ENCODE measurements at regions of chrX and their contacts with region 1.

Region 1: DNA sequence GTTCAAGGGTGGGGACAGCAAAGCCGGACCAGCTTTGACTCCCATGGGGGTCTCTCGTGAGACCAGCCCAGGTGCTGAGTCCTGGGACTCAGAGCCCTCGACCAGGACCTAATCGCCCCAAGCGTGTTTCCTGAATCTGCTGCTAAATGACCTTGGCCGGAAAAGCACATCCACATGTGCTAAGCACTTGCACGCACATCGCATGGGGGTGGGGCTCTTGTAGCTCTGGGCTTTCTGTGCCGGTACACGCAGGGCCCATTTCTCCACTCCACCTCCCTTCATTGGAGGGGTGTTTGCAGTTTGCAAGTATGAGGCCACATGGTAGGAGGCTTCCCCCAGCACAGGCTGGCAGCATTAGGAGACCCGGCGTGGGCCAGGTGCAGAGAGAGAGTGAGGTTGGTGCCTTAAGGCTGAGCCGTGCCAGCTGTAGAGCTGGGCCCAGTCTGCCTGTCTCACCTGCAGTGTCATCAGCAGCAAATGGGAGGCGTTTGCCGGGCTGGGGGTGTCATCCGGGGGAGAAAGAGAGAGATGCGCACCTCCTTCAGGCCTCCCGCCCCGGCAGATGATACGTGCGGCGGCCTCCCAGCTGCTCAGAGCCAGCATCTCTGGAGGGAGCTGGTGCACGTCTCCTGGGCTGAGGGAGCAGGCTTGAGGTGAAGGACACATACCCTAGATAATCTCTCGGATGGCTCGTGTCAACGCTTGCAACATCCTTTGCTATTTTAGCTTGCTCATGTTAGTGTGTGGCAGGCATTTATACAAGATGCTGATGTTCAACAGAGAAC is 45.2 kb upstream of the CLCN4 start:
- DNase-seq: peak; percentile 65
- ATAC-seq: peak; percentile 59
- H3K4me3 Mint-ChIP-seq: peak overlapping the region; percentile 84
- H3K27ac Mint-ChIP-seq: peak overlapping the region; percentile 99
- H3K4me1 Mint-ChIP-seq: peaks cover 85% of the 10 kb centered on the region
- H3K27me3 Mint-ChIP-seq: no peaks in the 10 kb centered on the region
- CTCF ChIP-seq: no peak

Region 2: DNA sequence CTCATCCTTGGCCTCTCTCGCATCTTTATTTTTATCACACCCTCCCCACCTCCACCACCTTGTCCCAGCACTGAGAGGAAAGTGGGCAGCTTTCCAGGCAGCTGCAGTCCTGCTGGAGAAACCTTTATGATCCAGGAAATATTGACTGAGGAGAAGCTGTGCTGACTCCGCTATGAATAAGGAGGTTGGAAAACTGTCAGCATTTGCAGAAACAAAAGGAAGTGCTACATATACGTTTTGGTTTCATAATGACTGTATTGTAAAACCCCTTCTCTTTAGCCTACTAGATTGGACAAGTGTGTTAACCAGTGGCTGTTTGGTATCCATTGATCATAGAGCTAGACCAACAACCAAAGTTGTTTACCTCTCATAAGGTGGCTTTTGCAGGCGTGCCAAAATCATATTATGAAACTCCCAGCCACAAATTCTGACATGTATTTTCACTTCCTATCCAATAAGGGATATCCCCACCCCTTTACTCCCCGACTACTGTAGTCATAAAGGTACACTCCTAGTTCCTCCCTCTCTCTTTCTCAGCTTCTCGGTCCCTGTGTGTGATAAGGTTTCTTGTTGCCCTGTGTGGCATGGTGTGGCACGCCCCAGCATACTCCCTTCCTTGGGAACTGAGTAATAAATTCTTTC is 434.3 kb before region 1 on chrX:
- CTCF ChIA-PET with region 1: no interaction called
- POLR2A ChIA-PET with region 1: no interaction called
- intact Hi-C with region 1: loop called (anchors 5 kb)
- DNase-seq: no peak
- ATAC-seq: peak; percentile 89
- H3K4me3 Mint-ChIP-seq: peak overlapping the region; percentile 58
- H3K27ac Mint-ChIP-seq: peak overlapping the region; percentile 89
- H3K4me1 Mint-ChIP-seq: peaks cover 50% of the 10 kb centered on the region
- H3K27me3 Mint-ChIP-seq: no peaks in the 10 kb centered on the region
- CTCF ChIP-seq: no peak

Region 3: DNA sequence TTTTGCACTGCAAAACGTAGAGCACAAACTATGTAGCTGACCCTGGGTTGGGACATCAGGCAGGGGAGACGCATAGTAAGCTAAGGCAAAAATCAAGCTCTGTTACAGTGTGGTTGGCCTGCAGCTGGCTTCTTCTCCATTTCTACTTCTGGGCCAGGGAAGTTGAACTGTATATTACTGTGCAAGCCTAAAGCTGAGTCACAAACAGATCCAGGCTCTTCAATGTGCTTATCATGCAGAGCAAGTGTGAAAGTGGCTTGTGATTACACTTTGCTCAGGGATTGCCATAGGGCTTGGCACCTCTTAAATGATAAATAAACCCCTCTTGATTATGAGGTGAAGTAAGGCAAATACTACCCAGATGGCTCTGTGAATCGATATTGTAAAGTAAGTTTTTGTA is 103.9 kb before region 1 on chrX:
- CTCF ChIA-PET with region 1: interaction called, 7 read pairs
- POLR2A ChIA-PET with region 1: interaction called, 64 read pairs
- intact Hi-C with region 1: loop called (anchors 1 kb)
- DNase-seq: no peak
- ATAC-seq: no peak
- H3K4me3 Mint-ChIP-seq: no peak overlapping the region
- H3K27ac Mint-ChIP-seq: no peak overlapping the region
- H3K4me1 Mint-ChIP-seq: peaks cover 41% of the 10 kb centered on the region
- H3K27me3 Mint-ChIP-seq: no peaks in the 10 kb centered on the region
- CTCF ChIP-seq: no peak

Region 4: GRCh38 chrX:10052906-10053625 is 58.5 kb before region 1 on chrX:
- CTCF ChIA-PET with region 1: no interaction called
- POLR2A ChIA-PET with region 1: interaction called, 27 read pairs
- intact Hi-C with region 1: no loop called
- DNase-seq: no peak
- ATAC-seq: peak; percentile 78
- H3K4me3 Mint-ChIP-seq: no peak overlapping the region
- H3K27ac Mint-ChIP-seq: peak overlapping the region; percentile 78
- H3K4me1 Mint-ChIP-seq: peaks cover 51% of the 10 kb centered on the region
- H3K27me3 Mint-ChIP-seq: no peaks in the 10 kb centered on the region
- CTCF ChIP-seq: no peak

Region 5: DNA sequence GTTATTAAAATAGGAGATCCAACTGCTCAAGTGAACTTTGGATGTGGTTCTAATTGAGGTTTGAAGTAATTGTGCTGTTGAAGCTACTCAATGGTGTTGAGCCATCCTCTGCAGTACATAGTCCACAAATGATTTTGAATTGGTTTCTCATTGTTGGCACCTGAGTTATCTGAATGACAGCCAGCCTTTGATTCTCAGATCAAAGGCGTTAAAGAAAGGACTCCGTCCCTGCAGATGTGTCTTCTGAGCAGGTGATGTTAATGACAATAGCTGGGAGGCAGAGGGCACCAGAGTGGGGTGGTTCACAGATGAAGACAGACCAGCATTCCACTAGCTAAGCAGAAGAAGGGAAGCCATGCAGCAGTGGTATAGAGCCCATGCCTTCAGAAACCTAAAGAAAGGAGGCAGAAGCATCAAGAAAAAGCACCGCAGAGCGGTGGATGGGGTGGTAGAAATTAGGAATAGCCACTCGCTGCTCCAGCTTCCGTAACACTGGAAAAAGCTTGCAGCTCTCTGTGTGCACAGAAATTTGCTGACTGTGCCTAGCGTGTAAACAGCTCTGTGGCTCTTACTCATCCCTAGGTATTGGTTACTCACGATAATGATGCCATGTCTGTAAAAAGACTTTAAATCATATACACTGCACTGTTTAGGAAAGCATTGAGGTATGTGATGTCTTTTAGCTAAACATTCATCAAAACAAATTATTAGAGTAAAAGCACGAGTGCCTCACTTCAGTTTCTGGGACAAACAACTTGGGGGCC is 33.9 kb before region 1 on chrX:
- CTCF ChIA-PET with region 1: interaction called, 5 read pairs
- POLR2A ChIA-PET with region 1: interaction called, 122 read pairs
- intact Hi-C with region 1: no loop called
- DNase-seq: no peak
- ATAC-seq: no peak
- H3K4me3 Mint-ChIP-seq: no peak overlapping the region
- H3K27ac Mint-ChIP-seq: no peak overlapping the region
- H3K4me1 Mint-ChIP-seq: peaks cover 13% of the 10 kb centered on the region
- H3K27me3 Mint-ChIP-seq: no peaks in the 10 kb centered on the region
- CTCF ChIP-seq: no peak

Region 6: DNA sequence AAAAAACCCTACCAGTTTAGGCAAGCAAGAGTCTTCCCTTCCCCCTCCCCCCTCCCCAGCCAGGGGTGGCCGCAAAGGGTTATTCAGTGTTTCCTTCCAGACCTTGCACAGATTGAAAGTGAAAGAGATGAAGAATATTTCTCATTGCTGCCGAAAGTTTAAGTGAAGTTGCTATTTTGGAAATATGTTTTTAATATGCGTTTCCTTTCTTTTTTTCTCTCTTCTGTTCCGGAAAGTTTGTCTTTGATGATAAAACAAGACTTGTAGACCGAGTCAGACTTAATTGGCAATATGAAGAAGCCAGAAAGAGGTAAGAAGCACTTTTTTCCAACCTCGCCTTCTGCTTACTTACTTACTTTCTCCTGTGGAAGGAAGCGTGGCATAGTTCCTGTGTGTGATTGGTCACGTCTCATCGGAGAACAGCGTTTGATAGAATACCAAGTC is 13.3 kb before region 1 on chrX:
- CTCF ChIA-PET with region 1: interaction called, 11 read pairs
- POLR2A ChIA-PET with region 1: interaction called, 229 read pairs
- intact Hi-C with region 1: loop called (anchors 1 kb)
- DNase-seq: no peak
- ATAC-seq: peak; percentile 81
- H3K4me3 Mint-ChIP-seq: peak overlapping the region; percentile 85
- H3K27ac Mint-ChIP-seq: peak overlapping the region; percentile 91
- H3K4me1 Mint-ChIP-seq: peaks cover 62% of the 10 kb centered on the region
- H3K27me3 Mint-ChIP-seq: no peaks in the 10 kb centered on the region
- CTCF ChIP-seq: no peak